ENCODE measurements at regions of chr15 and their contacts with region 1.

Region 1: GRCh38 chr15:78909791-78910228 is 35.0 kb downstream of the CTSH start:
- DNase-seq: peak; percentile 73
- ATAC-seq: peak; percentile 69
- H3K4me3 ChIP-seq: no peak overlapping the region
- H3K27ac ChIP-seq: no peak overlapping the region
- H3K4me1 ChIP-seq: peaks cover 16% of the 10 kb centered on the region
- H3K27me3 ChIP-seq: no peaks in the 10 kb centered on the region
- CTCF ChIP-seq: peak; percentile 87

Region 2: GRCh38 chr15:78989701-78990240 is 80.0 kb after region 1 on chr15:
- CTCF ChIA-PET with region 1: interaction called, 11 read pairs
- POLR2A ChIA-PET with region 1: no interaction called
- intact Hi-C with region 1: no loop called
- DNase-seq: no peak
- ATAC-seq: no peak
- H3K4me3 ChIP-seq: no peak overlapping the region
- H3K27ac ChIP-seq: no peak overlapping the region
- H3K4me1 ChIP-seq: peaks cover 11% of the 10 kb centered on the region
- H3K27me3 ChIP-seq: no peaks in the 10 kb centered on the region
- CTCF ChIP-seq: no peak

Region 3: DNA sequence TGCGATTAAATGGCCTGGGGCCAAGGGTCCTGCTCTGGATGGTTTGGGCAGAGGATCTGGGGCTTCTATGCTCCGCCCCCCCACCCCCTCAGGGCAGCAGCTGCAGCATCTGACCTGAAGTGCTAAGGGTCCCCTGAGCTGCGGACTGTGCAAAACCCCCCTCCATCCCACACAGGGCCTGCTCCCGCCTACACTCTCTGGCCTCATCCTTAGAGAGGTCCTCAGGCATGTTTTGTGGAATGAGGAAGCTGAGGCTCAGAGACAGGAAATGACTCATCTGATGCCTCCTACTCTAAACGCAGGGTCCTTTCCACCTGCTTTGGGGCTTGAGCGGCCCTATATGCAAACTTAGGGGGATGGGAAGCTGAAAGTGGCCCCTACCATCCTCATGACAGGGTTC is 94.5 kb after region 1 on chr15:
- CTCF ChIA-PET with region 1: no interaction called
- POLR2A ChIA-PET with region 1: no interaction called
- intact Hi-C with region 1: no loop called
- DNase-seq: peak; percentile 47
- ATAC-seq: no peak; the same call in 1 of the 2 replicates
- H3K4me3 ChIP-seq: no peak overlapping the region
- H3K27ac ChIP-seq: no peak overlapping the region
- H3K4me1 ChIP-seq: peaks cover 6% of the 10 kb centered on the region
- H3K27me3 ChIP-seq: no peaks in the 10 kb centered on the region
- CTCF ChIP-seq: no peak